Activated CD8-positive, alpha-beta T cell treated with anti-CD3 and anti-CD28 coated beads, Interleukin-2, amount 10 ng/mL, durations not matched to agents 7 days and 5 days (primary cell): ENCODE measurements at regions of chr3 and their contacts with region 1.

Region 1: GRCh38 chr3:129016356-129016719 is 15.2 kb downstream of the EFCC1 start:
- DNase-seq: peak; percentile 81
- ATAC-seq: peak; percentile 88
- H3K4me3 Mint-ChIP-seq: peak overlapping the region; percentile 66
- H3K27ac Mint-ChIP-seq: peak overlapping the region; percentile 91
- H3K4me1 Mint-ChIP-seq: peaks cover 37% of the 10 kb centered on the region
- H3K27me3 Mint-ChIP-seq: no peaks in the 10 kb centered on the region

Region 2: DNA sequence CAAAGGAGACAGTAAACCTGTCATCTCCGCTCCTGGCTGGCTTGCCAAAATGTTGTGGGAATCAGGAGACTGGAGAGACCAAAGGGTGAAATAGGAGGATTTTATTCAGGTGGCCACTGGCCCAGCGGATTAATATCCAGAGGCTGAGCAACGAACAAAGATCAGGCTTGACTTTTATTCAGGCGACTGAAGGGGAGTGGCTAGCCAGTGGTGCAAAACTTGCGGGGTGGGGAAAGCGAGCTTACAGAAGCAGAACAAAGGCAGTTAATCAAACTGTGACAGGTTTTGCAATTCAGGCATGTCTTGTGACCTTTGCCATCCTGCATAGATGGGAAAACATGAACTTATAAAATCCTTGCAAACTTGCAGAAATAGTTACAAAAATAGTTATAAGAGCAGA is 156.7 kb before region 1 on chr3:
- CTCF ChIA-PET with region 1: no interaction called
- POLR2A ChIA-PET with region 1: no interaction called
- DNase-seq: no peak
- ATAC-seq: no peak
- H3K4me3 Mint-ChIP-seq: no peak overlapping the region
- H3K27ac Mint-ChIP-seq: no peak overlapping the region
- H3K4me1 Mint-ChIP-seq: peaks cover under 1% of the 10 kb centered on the region
- H3K27me3 Mint-ChIP-seq: no peaks in the 10 kb centered on the region

Region 3: DNA sequence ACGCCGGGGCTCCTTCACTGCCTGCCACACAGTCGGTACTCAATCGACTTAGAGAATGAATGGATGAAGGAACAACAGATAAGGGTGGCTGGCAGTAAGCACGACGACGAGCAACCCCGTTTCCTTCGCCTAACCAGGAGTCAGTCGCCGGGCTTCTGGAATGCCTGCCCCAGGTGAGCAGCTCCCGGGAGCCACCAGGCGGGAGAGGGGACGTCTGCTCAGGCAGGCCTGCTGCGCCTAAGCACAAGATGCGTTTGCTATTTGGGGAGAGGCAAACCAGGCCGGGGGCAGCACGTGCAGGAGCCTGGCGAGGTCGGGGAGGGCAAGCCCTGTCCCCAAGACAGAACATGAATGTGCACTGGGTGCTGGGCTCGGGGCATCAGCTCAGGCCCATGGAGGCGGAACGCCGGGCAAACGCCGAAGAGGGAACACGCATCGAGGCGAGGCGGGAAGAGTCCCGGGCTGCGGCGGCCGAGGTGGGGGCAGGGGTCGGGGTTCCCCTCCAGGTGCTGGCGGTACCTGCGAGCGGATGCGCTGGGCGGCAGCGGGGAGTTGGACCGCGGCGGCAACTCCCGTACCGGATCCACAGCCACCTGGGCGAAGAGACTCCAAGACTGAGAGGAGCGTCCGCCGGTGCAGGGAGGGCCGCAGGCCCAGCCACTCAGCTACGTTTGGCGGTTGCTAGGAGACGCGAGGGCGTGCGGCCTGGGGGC is 22.7 kb before region 1 on chr3 and contains the start of gene CFAP92:
- CTCF ChIA-PET with region 1: interaction called, 38 read pairs
- POLR2A ChIA-PET with region 1: interaction called, 8 read pairs
- DNase-seq: peak; percentile 95
- ATAC-seq: peak; percentile 98
- H3K4me3 Mint-ChIP-seq: peak within 1 kb of the TSS; percentile 65
- H3K27ac Mint-ChIP-seq: peak within 1 kb of the TSS; percentile 24
- H3K4me1 Mint-ChIP-seq: peaks cover 29% of the 10 kb centered on the region
- H3K27me3 Mint-ChIP-seq: peaks cover 10% of the 10 kb centered on the region
- total RNA-seq, gene CFAP92: 0.18 to 0.26 TPM

Region 4: GRCh38 chr3:129003578-129004160 is 12.7 kb before region 1 on chr3:
- CTCF ChIA-PET with region 1: interaction called, 103 read pairs
- POLR2A ChIA-PET with region 1: interaction called, 44 read pairs
- DNase-seq: peak; percentile 58
- ATAC-seq: peak; percentile 79
- H3K4me3 Mint-ChIP-seq: peak overlapping the region; percentile 10
- H3K27ac Mint-ChIP-seq: no peak overlapping the region
- H3K4me1 Mint-ChIP-seq: peaks cover 50% of the 10 kb centered on the region
- H3K27me3 Mint-ChIP-seq: peaks cover 39% of the 10 kb centered on the region

Region 5: DNA sequence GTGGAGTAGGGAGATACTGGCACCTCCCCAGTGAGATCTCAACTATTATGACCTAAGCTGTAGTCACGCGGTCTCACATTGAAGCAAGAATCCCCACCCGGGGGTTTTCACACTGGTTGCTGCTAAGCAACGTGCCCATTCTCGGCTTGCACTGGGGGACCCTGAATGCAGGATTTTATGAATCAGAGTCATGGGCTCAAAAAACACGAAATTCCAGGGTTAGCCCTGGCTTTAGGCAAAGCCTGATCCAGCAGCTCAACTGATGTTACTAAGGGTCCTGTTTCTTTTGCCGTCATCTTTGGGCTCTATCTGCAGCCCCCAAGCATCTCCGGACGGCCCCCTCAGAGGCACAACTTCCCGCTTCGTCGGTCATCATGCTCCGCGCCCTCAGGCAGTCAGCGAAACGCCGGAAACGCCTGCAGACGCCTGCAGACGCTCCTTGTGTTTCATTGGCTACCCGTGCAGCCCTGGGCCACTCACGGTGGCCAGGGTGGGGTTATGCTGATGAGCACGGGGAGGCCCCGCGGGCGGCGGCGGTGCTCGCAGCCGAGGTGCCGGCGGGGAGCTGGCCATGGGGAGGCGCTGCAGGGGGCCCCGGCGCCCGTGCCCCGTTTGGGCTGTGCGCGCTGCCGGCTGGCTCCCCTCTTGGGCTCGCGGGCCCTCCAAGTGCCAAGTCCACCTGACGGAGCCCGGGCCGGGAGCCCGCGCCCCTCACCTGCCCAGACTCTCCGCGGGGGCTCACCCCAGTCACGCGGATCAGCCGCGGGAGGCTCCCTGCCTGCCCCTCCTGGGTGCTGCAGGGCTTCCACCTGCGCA is 10.6 kb after region 1 on chr3:
- CTCF ChIA-PET with region 1: interaction called, 117 read pairs
- POLR2A ChIA-PET with region 1: interaction called, 66 read pairs
- DNase-seq: peak; percentile 96
- ATAC-seq: peak; percentile 100
- H3K4me3 Mint-ChIP-seq: peak overlapping the region; percentile 81
- H3K27ac Mint-ChIP-seq: peak overlapping the region; percentile 95
- H3K4me1 Mint-ChIP-seq: peaks cover 30% of the 10 kb centered on the region
- H3K27me3 Mint-ChIP-seq: peaks cover 2% of the 10 kb centered on the region

Region 6: GRCh38 chr3:129035360-129036221 is 19.3 kb after region 1 on chr3:
- CTCF ChIA-PET with region 1: interaction called, 14 read pairs
- POLR2A ChIA-PET with region 1: interaction called, 9 read pairs
- DNase-seq: peak; percentile 33
- ATAC-seq: peak; percentile 59
- H3K4me3 Mint-ChIP-seq: no peak overlapping the region
- H3K27ac Mint-ChIP-seq: peak overlapping the region; percentile 70
- H3K4me1 Mint-ChIP-seq: peaks cover 25% of the 10 kb centered on the region
- H3K27me3 Mint-ChIP-seq: peaks cover 4% of the 10 kb centered on the region

Region 7: DNA sequence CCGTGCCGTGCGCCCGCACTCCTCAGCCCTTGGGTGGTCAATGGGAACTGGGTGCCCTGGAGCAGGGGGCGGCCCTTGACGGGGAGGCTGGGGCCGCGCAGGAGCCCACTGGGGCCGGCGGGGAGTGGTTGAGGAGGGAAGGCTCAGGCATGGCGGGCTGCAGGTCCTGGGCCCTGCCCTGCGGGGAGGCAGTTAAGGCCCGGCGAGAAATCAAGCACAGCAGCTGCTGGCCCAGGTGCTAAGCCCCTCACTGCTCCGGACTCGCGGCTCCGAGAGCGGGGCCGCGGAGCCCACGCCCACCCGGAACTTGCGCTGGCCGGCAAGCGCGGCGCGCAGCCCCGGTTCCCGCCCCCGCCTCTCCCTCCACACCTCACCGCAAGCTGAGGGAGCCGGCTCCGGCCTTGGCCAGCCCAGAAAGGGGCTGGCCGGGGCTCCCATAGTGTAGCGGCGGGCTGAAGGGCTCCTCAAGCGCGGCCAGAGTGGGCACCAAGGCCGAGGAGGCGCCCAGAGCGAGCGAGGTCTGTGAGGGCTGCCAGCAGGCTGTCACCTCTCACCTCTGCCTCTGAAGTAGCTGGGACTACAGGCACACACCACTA is 52.1 kb after region 1 on chr3:
- CTCF ChIA-PET with region 1: interaction called, 13 read pairs
- POLR2A ChIA-PET with region 1: interaction called, 4 read pairs
- DNase-seq: peak; percentile 30
- ATAC-seq: peak; percentile 77
- H3K4me3 Mint-ChIP-seq: peak overlapping the region; percentile 58
- H3K27ac Mint-ChIP-seq: peak overlapping the region; percentile 39
- H3K4me1 Mint-ChIP-seq: peaks cover 25% of the 10 kb centered on the region
- H3K27me3 Mint-ChIP-seq: peaks cover 2% of the 10 kb centered on the region

Region 8: DNA sequence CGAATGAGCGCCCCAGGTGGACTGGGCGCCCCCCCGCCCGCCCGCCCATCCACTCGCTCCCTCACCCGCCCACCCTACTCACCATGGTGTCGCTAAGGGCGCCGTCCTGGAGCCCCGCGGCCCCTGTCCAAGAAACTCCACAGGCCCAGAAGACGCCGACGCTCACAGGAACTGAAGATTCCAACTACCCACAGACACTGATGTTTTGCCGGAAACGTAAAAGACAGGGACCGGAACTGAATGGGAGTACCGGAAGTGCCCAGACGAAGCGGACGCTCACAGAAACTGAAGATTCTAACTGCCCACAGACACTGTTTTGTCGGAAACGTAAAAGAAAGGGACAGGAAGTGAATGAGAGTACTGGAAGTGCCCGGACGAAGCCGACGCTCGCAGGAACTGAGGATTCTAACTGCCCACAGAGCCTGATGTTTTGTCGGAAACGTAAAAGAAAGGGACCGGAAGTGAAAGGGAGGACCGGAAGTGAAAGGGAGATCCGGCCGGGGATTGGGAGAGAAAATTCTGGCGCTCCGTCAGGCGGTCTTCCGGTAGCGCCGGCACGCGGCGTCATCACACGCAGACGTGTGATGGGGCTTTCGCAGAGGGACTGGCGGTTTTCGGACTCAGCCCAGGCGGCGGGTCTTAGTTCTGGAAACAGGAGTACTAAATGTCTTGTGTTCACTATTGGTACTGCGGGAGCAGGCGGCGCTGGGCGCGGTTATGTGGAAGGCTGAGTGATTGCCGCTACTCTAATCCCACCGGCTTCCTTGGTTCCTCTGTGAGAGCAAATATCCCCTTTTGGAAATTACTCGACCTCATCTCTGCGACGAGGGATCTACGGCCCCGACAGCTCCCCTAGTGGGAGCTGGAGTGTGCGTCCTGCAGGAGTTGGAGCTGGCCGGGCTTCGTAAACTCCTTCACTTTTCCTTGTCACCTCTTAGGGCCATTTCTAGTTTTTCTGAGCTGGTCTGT is 144.8 kb after region 1 on chr3 and contains the start of gene ISY1:
- CTCF ChIA-PET with region 1: interaction called, 14 read pairs
- POLR2A ChIA-PET with region 1: no interaction called
- DNase-seq: peak; percentile 93
- ATAC-seq: peak; percentile 84
- H3K4me3 Mint-ChIP-seq: peak within 1 kb of the TSS; percentile 91
- H3K27ac Mint-ChIP-seq: peak within 1 kb of the TSS; percentile 99
- H3K4me1 Mint-ChIP-seq: peaks cover 36% of the 10 kb centered on the region
- H3K27me3 Mint-ChIP-seq: no peaks in the 10 kb centered on the region
- total RNA-seq, gene ISY1: 57.9 to 65.7 TPM